ENCODE measurements at regions of chr6 and their contacts with region 1.

Region 1: DNA sequence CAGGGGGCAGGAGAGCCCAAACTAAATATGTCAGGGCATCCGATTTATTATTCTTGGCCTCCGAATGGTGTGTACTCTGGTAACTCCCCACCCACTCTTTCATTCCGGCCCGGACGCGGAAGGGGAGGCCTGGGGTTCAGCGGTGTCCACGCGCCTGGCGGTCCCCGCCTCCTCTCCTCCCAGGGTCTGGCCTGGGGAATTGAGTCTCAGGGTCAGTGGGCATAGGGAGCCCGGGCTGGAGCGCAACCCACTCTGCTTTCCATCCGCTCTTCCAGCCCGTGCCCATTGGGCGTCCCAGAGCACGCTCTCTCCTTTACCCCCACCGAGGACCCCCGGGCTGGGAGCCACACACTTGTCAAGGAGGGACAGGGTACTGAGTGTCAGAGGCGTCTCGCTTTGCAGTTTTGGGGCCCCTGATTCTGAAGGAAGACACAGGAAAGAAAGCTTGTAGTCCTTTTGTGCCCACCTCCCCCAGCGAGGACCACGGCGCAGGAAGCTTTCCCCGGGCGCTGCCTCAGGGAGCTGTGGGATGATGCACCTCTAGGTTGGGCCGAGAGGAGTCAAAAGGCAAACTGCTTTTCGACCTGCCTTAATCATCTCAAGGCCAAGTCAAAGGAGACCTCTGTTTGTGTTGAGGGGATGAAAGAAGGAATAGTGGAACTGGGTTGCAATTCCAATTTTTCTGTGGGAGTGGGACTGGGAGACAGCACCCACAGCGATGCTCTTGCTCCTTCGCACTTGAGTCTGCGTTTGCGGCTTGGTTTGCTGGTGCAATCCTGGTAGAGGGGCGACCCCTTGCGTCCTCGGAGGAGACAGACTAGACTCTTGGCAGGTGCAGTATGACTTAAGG is 2.5 kb downstream of the RSPO3 start:
- DNase-seq: peak; percentile 81
- CTCF ChIP-seq: peak; percentile 91

Region 2: GRCh38 chr6:126797981-126798380 is 323.0 kb before region 1 on chr6:
- in situ Hi-C with region 1: loop called (anchors 25 kb)
- DNase-seq: no peak
- CTCF ChIP-seq: no peak

Region 3: DNA sequence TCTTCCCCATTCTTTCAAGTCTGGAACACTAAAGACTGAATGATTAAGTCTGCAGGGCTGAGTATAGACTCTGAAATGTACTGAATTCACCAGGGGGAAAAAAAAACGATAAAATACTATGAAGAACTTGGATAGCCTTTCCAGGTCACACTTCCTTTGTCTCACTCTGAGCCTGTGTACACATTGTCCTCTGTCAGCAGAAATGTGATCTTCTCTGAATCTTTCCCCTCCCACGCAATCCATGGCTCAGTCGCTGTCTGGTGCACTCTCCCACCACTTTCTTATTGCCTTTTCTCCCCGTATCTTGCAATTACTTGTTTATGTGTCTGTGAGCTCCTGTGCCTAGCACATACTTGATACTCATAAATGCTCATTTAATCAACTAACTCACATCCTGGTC is 215.1 kb before region 1 on chr6:
- in situ Hi-C with region 1: no loop called
- DNase-seq: no peak
- CTCF ChIP-seq: no peak

Region 4: DNA sequence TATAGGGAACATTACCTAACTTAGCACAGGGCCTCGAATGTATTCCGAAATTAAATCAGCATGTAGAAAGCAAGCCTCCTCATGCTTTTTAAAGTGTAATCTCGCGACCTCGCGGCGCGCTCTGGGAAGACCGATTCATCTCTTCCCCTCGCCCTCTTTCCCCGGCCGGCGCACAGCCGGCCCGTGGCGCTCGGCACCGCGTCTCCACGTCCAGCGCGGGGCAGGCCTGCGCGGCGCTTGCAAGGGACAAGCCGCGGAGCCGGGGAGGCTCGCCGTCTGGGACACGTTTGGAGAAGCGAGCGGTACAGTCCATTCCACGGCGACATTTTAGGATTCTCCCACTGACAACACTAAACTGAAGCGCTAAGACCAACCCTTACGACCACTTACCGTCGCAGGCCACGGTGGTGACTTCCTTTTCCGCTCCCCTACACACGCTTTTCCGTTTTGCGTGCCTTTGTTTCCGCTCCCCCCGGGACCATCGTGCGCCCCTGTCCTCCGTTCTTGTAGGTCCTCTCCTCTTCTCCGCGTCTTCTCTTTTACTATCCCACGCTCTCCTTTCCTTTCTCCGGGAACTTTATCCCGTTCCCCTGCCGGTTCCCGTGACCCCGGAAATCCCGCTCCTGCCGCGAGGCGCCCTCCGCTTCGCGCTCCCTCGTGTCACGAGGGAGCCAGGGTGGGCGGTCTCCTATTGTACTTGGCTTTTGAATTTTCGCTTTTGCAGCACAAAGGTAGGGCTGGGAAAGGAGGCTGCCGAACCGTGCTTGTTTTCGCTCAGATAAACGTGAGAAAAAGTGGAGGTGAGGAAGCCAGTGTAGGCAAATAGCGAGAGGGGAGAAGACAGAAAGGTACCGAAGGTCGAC is 222.2 kb after region 1 on chr6 and contains the start of gene ECHDC1:
- in situ Hi-C with region 1: no loop called
- DNase-seq: peak; percentile 79
- CTCF ChIP-seq: peak; percentile 17